Left ventricle myocardium superior (tissue), 1 donor: ENCODE measurements at regions of chr2 and their contacts with region 1.

Region 1: GRCh38 chr2:161017780-161018470 is 142.3 kb upstream of the TANK start:
- DNase-seq: no peak
- ATAC-seq: peak; percentile 77

Region 2: GRCh38 chr2:161063157-161063954 is 45.4 kb after region 1 on chr2:
- intact Hi-C with region 1: loop called (anchors 10 kb)
- DNase-seq: peak; percentile 48
- ATAC-seq: peak; percentile 85